Panc1 (cell line): ENCODE measurements at regions of chr6 and their contacts with region 1.

Region 1: DNA sequence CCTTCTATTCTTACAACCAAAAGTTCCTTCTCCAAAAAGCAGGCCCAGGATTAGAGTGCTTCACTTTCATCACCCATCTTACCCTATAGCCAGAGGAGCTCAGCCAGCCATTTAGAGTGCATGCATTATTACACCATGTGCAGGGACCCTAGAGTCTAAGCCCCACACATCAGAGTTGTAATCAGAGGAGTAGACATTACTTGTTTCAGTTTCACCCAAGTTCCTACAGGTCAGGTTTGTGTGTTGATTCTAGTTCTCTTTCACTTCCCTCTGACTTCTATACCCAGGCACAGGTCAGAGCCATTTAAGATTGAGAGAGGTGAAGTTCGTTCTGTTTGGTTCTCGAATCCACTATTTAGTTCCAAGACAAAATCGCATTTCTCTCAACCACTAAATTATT is 16.3 kb upstream of the ARFGEF3 start:
- DNase-seq: no peak
- ATAC-seq: no peak
- H3K4me3 ChIP-seq: no peak overlapping the region
- H3K27ac ChIP-seq: no peak overlapping the region
- H3K4me1 ChIP-seq: no peaks in the 10 kb centered on the region
- H3K27me3 ChIP-seq: peaks cover 8% of the 10 kb centered on the region; the same call in 1 of the 2 replicates
- CTCF ChIP-seq: no peak

Region 2: GRCh38 chr6:137799950-137800568 is 345.3 kb before region 1 on chr6:
- CTCF ChIA-PET with region 1: no interaction called
- POLR2A ChIA-PET with region 1: no interaction called
- in situ Hi-C with region 1: no loop called
- intact Hi-C with region 1: no loop called
- DNase-seq: no peak
- ATAC-seq: no peak
- H3K4me3 ChIP-seq: no peak overlapping the region
- H3K27ac ChIP-seq: no peak overlapping the region
- H3K4me1 ChIP-seq: no peaks in the 10 kb centered on the region
- H3K27me3 ChIP-seq: no peaks in the 10 kb centered on the region
- CTCF ChIP-seq: peak; percentile 72

Region 3: GRCh38 chr6:138044458-138044857 is 100.9 kb before region 1 on chr6:
- CTCF ChIA-PET with region 1: no interaction called
- POLR2A ChIA-PET with region 1: no interaction called
- in situ Hi-C with region 1: no loop called
- intact Hi-C with region 1: no loop called
- DNase-seq: no peak
- ATAC-seq: no peak
- H3K4me3 ChIP-seq: no peak overlapping the region
- H3K27ac ChIP-seq: no peak overlapping the region
- H3K4me1 ChIP-seq: no peaks in the 10 kb centered on the region
- H3K27me3 ChIP-seq: no peaks in the 10 kb centered on the region
- CTCF ChIP-seq: no peak

Region 4: GRCh38 chr6:138160329-138161087 is 15.1 kb after region 1 on chr6:
- CTCF ChIA-PET with region 1: no interaction called
- POLR2A ChIA-PET with region 1: interaction called, 16 read pairs
- in situ Hi-C with region 1: no loop called
- intact Hi-C with region 1: no loop called
- DNase-seq: no peak
- ATAC-seq: no peak
- H3K4me3 ChIP-seq: no peak overlapping the region
- H3K27ac ChIP-seq: no peak overlapping the region
- H3K4me1 ChIP-seq: peaks cover 9% of the 10 kb centered on the region; the same call in 1 of the 2 replicates
- H3K27me3 ChIP-seq: peaks cover 57% of the 10 kb centered on the region
- CTCF ChIP-seq: no peak